ENCODE measurements at regions of chr5 and their contacts with region 1.

Region 1: GRCh38 chr5:60944904-60945812 is at the starts of genes ERCC8 and NDUFAF2:
- DNase-seq: peak; percentile 75 to 93 (median 82)
- ATAC-seq: peak; percentile 98
- H3K4me3 ChIP-seq: peak within 1 kb of the TSS; percentile 73
- H3K4me3 Mint-ChIP-seq: no peak within 1 kb of the TSS
- H3K27ac ChIP-seq: peak within 1 kb of the TSS; percentile 47 to 63
- H3K27ac Mint-ChIP-seq: no peak within 1 kb of the TSS
- H3K4me1 ChIP-seq: peaks cover 10% of the 10 kb centered on the region
- H3K4me1 Mint-ChIP-seq: peaks cover 25% of the 10 kb centered on the region
- H3K27me3 ChIP-seq: no peaks in the 10 kb centered on the region
- H3K27me3 Mint-ChIP-seq: no peaks in the 10 kb centered on the region
- CTCF ChIP-seq: no peak
- total RNA-seq, gene ERCC8: 2.6 to 3.7 TPM
- total RNA-seq, gene NDUFAF2: 8.1 to 8.8 TPM

Region 2: GRCh38 chr5:60699530-60700382 is 245.4 kb before region 1 on chr5 and contains the start of gene DEPDC1B:
- CTCF ChIA-PET with region 1: no interaction called
- POLR2A ChIA-PET with region 1: no interaction called
- intact Hi-C with region 1: loop called in 1 of 2 experiments (anchors 5 kb)
- DNase-seq: peak; percentile 57 to 91 (median 76)
- ATAC-seq: peak; percentile 89
- H3K4me3 ChIP-seq: peak within 1 kb of the TSS; percentile 95
- H3K4me3 Mint-ChIP-seq: peak within 1 kb of the TSS; percentile 96
- H3K27ac ChIP-seq: peak within 1 kb of the TSS in 1 of 2 donors; percentile 36
- H3K27ac Mint-ChIP-seq: peak within 1 kb of the TSS; percentile 45
- H3K4me1 ChIP-seq: peaks cover 24% of the 10 kb centered on the region
- H3K4me1 Mint-ChIP-seq: peaks cover 22% of the 10 kb centered on the region
- H3K27me3 ChIP-seq: no peaks in the 10 kb centered on the region
- H3K27me3 Mint-ChIP-seq: no peaks in the 10 kb centered on the region
- CTCF ChIP-seq: no peak
- total RNA-seq, gene DEPDC1B: 0.39 to 0.60 TPM

Region 3: DNA sequence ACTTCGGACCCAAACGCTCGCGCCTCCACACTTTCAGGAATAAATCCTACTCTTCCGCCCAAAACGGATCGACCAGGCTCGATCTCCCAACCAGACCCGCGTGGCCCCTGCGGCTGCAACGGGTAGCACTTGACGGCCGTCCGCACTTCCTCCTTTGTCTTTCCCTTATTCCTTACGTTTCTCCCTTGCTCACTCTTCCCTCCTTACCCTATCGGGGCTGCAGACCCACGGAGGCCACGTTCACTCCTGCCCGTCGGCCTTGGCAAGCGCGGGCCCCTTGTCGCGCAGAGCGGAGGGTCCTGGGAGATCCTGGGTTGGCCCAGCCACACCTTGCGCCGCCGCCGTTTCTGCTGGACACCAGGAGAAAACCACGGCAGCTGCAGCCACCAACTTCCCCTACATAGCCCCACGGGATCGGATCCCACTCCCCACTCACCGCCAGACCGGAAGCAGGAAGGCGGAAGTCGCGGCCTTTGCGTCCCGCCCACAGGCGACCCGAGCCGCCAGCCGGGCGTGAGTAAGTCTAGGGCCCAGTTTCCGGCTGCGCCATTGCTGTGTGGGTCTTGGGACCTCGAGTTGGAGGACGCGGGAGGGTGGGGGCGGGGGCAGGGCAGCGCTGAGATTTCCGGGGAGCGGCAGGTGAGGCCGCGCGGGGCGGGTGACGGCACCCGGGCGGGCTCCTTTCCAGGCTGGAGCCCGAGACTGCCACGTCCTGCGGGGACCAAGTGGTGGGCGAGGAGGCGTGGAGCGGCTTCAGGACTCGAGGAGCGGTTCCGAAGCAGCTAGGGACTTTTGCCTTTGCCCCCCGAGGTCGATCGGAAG is 217.1 kb after region 1 on chr5 and contains the start of gene SMIM15:
- CTCF ChIA-PET with region 1: no interaction called
- POLR2A ChIA-PET with region 1: no interaction called
- intact Hi-C with region 1: loop called in 1 of 2 experiments (anchors 5 kb)
- DNase-seq: peak; percentile 60 to 89 (median 75)
- ATAC-seq: peak; percentile 85
- H3K4me3 ChIP-seq: peak within 1 kb of the TSS; percentile 73
- H3K4me3 Mint-ChIP-seq: peak within 1 kb of the TSS; percentile 94
- H3K27ac ChIP-seq: peak within 1 kb of the TSS; percentile 69 to 77
- H3K27ac Mint-ChIP-seq: peak within 1 kb of the TSS; percentile 84
- H3K4me1 ChIP-seq: peaks cover 7% of the 10 kb centered on the region
- H3K4me1 Mint-ChIP-seq: peaks cover 50% of the 10 kb centered on the region
- H3K27me3 ChIP-seq: no peaks in the 10 kb centered on the region
- H3K27me3 Mint-ChIP-seq: no peaks in the 10 kb centered on the region
- CTCF ChIP-seq: no peak
- total RNA-seq, gene SMIM15: 16.5 to 18.2 TPM

Region 4: DNA sequence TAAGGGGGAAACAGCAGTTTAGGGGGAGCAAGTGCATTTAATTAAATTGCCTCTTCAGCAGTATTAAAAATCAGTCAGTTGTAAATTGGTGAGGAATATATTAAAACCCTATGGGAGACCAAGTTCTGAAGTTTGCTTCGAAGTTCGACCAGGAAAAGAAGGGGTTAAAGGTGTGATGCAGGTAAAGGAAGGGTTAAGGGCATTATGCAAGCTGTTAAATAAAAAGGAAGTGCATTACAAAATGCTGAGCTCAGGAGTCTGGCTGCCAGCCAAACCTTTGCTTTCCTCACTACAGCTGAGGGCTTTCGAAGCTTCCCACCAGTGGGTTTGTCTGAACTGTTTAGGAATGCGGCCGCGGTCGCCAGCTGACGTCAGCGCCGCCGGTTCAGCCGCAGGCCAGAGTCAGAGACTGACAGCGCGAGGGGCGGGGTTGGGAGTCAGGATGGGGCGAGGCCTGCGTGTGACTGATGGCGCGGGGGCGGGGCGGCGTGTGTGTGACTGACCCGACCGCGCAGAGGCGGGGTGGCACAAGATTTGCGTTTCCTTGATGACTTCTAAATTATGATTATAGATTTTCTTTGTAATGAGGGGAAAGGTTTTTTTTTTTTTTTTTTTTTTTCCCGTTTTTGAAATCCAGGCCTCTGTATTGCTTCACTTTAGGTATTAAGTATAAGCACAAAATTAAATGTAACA is 463.5 kb after region 1 on chr5:
- CTCF ChIA-PET with region 1: interaction called, 3 read pairs
- POLR2A ChIA-PET with region 1: no interaction called
- intact Hi-C with region 1: loop called in 1 of 2 experiments (anchors 5 kb)
- DNase-seq: peak; percentile 90 to 100 (median 98)
- ATAC-seq: peak; percentile 95
- H3K4me3 ChIP-seq: peak overlapping the region; percentile 42
- H3K4me3 Mint-ChIP-seq: peak overlapping the region; percentile 86
- H3K27ac ChIP-seq: peak overlapping the region in 1 of 2 donors; percentile 37
- H3K27ac Mint-ChIP-seq: peak overlapping the region; percentile 71
- H3K4me1 ChIP-seq: no peaks in the 10 kb centered on the region
- H3K4me1 Mint-ChIP-seq: peaks cover 25% of the 10 kb centered on the region
- H3K27me3 ChIP-seq: no peaks in the 10 kb centered on the region
- H3K27me3 Mint-ChIP-seq: no peaks in the 10 kb centered on the region
- CTCF ChIP-seq: no peak

Region 5: DNA sequence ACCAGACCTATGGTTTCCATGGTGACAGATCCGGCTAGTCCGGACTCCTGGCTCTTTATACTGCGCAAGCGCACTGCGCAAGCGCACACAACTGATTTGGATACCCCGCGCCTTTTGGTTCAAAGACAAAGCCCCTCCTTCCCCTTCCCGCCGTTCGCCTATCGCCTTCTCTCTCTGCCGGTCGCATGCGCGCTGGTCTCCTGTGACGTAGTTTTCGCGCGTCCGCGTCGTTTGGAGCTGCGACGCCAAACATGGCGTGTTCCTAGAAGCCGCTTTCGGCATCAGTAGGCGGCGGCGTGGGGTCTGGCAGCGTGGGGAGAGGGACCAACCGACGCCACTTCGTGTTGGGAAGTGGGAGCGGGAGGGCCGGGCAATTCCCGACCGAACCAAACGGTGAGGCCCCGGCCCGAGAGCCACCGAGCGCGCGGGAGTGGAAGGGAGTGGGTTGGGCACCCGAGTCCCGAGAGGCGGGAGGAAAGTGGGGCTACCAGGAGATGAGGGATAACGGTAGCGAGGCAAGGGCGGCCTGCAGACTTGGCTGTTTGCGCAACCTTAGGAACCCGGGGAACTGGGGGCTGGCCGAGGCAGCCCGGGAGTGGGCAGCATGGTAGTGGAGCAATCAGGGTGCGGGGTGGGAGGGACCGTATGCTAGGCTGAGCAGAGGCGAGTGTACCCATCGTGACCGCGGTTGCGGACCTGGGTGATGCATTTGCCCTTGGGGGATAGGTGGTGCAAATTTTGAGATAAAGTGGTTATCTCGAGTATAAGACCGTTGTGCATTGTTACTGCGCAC is 1467.6 kb after region 1 on chr5 and contains the start of gene IPO11:
- CTCF ChIA-PET with region 1: no interaction called
- POLR2A ChIA-PET with region 1: no interaction called
- intact Hi-C with region 1: loop called in 1 of 2 experiments (anchors 10 kb)
- DNase-seq: peak; percentile 97 to 100 (median 98)
- ATAC-seq: peak; percentile 94
- H3K4me3 ChIP-seq: peak within 1 kb of the TSS; percentile 86
- H3K4me3 Mint-ChIP-seq: peak within 1 kb of the TSS; percentile 88
- H3K27ac ChIP-seq: peak within 1 kb of the TSS; percentile 69 to 79
- H3K27ac Mint-ChIP-seq: peak within 1 kb of the TSS; percentile 78
- H3K4me1 ChIP-seq: peaks cover 14% of the 10 kb centered on the region
- H3K4me1 Mint-ChIP-seq: peaks cover 30% of the 10 kb centered on the region
- H3K27me3 ChIP-seq: no peaks in the 10 kb centered on the region
- H3K27me3 Mint-ChIP-seq: no peaks in the 10 kb centered on the region
- CTCF ChIP-seq: no peak
- total RNA-seq, gene IPO11: 15.1 to 16.1 TPM

Measured in CD4-positive, alpha-beta T cell (primary cell).